Activated CD4-positive, alpha-beta memory T cell treated with anti-CD3 and anti-CD28 coated beads, Interleukin-2, amount 10 ng/mL, durations not matched to agents 7 days and 5 days (primary cell): ENCODE measurements at regions of chr5 and their contacts with region 1.

Region 1: GRCh38 chr5:140401362-140402257 is at the start of gene ANKHD1:
- DNase-seq: peak; percentile 98
- H3K4me3 Mint-ChIP-seq: no peak within 1 kb of the TSS
- H3K27ac Mint-ChIP-seq: peak within 1 kb of the TSS; percentile 76
- H3K4me1 Mint-ChIP-seq: peaks cover 34% of the 10 kb centered on the region
- H3K27me3 Mint-ChIP-seq: no peaks in the 10 kb centered on the region
- total RNA-seq, gene ANKHD1: 109 to 122 TPM

Region 2: DNA sequence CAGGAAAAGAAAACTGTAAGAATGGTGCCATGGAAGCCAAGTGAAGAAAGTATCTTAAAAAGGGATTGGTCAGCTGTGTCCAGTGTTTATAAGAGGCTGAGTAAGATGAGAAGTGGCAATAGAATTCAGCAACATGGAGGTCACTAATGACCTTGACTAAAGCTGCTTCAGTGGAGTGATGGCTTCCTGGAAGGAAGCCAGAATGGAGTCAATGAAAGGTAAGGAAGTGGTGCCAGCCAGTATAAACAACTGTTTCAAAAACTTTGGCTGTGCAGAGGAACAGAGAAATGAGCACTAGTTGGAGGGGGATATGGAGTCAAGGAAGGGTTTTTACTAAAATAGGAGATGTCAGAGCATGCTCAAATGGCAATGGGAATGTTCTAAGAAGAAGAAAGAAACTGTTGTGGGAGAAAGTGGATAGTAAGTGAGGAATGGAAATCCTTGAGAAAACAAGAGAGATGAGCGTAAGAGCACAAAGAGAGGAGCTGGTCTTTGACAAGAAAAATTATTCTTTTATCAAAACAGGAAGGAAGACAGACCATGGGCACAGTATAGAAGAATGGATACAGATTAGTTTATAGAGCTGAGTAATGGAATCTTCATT is 347.4 kb before region 1 on chr5:
- CTCF ChIA-PET with region 1: no interaction called
- POLR2A ChIA-PET with region 1: no interaction called
- DNase-seq: no peak
- H3K4me3 Mint-ChIP-seq: no peak overlapping the region
- H3K27ac Mint-ChIP-seq: no peak overlapping the region
- H3K4me1 Mint-ChIP-seq: no peaks in the 10 kb centered on the region
- H3K27me3 Mint-ChIP-seq: peaks cover 16% of the 10 kb centered on the region

Region 3: GRCh38 chr5:140287801-140288521 is 113.6 kb before region 1 on chr5:
- CTCF ChIA-PET with region 1: no interaction called
- POLR2A ChIA-PET with region 1: no interaction called
- DNase-seq: no peak
- H3K4me3 Mint-ChIP-seq: no peak overlapping the region
- H3K27ac Mint-ChIP-seq: no peak overlapping the region
- H3K4me1 Mint-ChIP-seq: peaks cover 39% of the 10 kb centered on the region
- H3K27me3 Mint-ChIP-seq: no peaks in the 10 kb centered on the region

Region 4: GRCh38 chr5:140362860-140363630 is 38.6 kb before region 1 on chr5:
- CTCF ChIA-PET with region 1: interaction called, 11 read pairs
- POLR2A ChIA-PET with region 1: interaction called, 5 read pairs
- DNase-seq: peak; percentile 87
- H3K4me3 Mint-ChIP-seq: peak overlapping the region; percentile 71
- H3K27ac Mint-ChIP-seq: no peak overlapping the region
- H3K4me1 Mint-ChIP-seq: peaks cover 12% of the 10 kb centered on the region
- H3K27me3 Mint-ChIP-seq: peaks cover 3% of the 10 kb centered on the region

Region 5: DNA sequence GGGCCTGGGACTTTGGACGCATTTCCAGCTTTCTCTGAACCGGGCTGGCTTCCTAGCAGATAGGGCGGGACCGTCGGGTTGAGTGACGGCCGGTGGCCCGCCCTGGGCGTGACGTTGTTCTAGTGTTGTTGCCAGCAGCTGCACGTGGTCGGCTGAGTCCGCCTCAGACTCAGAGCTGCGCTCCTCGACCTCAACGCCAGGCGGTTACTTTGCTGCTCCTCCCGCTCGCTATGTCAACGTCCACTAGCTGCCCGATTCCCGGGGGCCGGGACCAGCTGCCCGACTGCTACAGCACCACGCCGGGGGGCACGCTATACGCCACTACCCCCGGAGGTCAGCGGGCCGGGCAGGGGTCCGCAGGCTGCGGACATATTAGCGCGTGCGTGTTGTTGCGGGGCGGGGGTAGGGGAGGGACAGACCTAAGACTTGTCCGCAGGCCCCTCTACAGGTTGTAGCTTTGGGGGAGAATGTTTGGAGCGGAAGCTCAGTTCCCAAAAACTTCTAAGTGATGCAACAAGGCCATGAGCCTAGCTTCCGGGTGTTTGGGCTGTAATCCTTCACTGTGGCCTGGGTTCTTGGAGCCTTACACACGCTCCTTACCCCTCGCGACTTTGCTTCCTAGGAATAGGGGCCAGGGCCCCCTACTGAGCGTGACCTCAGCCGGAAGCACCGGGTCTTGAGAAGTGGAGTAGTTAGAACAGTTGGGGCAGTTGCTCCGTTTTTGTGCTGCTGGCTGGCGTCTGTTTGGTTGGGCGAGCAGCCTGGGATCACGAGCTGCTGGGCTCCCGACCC is 146.1 kb after region 1 on chr5 and contains the start of gene EIF4EBP3:
- CTCF ChIA-PET with region 1: interaction called, 3 read pairs
- POLR2A ChIA-PET with region 1: interaction called, 27 read pairs
- DNase-seq: peak; percentile 89
- H3K4me3 Mint-ChIP-seq: peak within 1 kb of the TSS; percentile 66
- H3K27ac Mint-ChIP-seq: peak within 1 kb of the TSS; percentile 83
- H3K4me1 Mint-ChIP-seq: peaks cover 56% of the 10 kb centered on the region
- H3K27me3 Mint-ChIP-seq: no peaks in the 10 kb centered on the region
- total RNA-seq, gene EIF4EBP3: 8.0 to 11.6 TPM

Region 6: GRCh38 chr5:140557136-140557805 is 155.7 kb after region 1 on chr5 and contains the start of gene SRA1:
- CTCF ChIA-PET with region 1: no interaction called
- POLR2A ChIA-PET with region 1: interaction called, 18 read pairs
- DNase-seq: peak; percentile 91
- H3K4me3 Mint-ChIP-seq: peak within 1 kb of the TSS; percentile 83
- H3K27ac Mint-ChIP-seq: peak within 1 kb of the TSS; percentile 79
- H3K4me1 Mint-ChIP-seq: peaks cover 50% of the 10 kb centered on the region
- H3K27me3 Mint-ChIP-seq: no peaks in the 10 kb centered on the region
- total RNA-seq, gene SRA1: 37.4 to 38.3 TPM

Region 7: DNA sequence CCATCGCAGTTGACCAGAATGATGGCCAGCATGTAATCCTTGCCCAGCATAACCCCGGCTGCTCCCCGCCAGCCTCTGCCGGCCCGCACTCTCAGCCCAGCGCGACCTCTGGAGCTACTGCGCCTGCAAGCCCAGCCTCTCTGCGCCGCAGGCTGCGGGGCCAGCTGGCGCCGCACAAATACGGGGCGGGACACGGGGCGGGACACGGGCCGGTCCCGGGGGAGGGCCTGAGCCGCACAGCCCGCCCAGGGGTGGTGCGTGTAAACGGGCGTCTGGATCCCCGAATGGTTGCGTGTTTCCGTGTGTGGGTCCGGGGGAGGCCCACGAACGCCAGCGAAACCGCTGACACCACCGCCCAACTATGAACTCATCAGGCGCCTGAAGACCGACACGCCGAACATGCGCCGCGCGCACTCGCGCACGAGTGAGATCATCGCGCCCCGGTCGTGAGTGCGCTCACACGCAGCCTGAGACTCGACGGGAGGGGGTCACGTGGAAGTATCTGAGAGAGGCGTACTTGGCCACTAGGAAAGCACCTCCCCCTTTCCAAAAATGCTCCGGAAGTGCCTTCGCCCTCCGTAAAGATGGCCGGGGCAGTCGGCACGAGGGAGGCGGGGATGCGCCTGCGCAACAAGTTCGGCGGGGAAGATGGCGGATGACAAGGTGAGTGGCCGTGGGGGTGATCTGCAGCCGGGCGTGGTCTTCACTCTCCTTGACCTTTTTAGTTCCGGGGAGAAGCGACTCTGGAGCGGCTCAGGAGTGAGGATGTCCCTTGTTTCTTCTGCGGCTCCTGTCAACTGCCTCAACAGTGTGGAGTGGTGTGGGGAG is 162.8 kb after region 1 on chr5 and contains the starts of genes APBB3 and SLC35A4:
- CTCF ChIA-PET with region 1: no interaction called
- POLR2A ChIA-PET with region 1: interaction called, 11 read pairs
- DNase-seq: peak; percentile 98
- H3K4me3 Mint-ChIP-seq: peak within 1 kb of the TSS; percentile 93
- H3K27ac Mint-ChIP-seq: peak within 1 kb of the TSS; percentile 89
- H3K4me1 Mint-ChIP-seq: peaks cover 67% of the 10 kb centered on the region
- H3K27me3 Mint-ChIP-seq: no peaks in the 10 kb centered on the region
- total RNA-seq, gene APBB3: 23.7 to 27.5 TPM
- total RNA-seq, gene SLC35A4: 78.9 to 82.1 TPM

Region 8: GRCh38 chr5:140690941-140691924 is 289.6 kb after region 1 on chr5 and contains the starts of genes HARS1 and HARS2:
- CTCF ChIA-PET with region 1: no interaction called
- POLR2A ChIA-PET with region 1: interaction called, 21 read pairs
- DNase-seq: peak; percentile 85
- H3K4me3 Mint-ChIP-seq: peak within 1 kb of the TSS; percentile 98
- H3K27ac Mint-ChIP-seq: peak within 1 kb of the TSS; percentile 89
- H3K4me1 Mint-ChIP-seq: peaks cover 44% of the 10 kb centered on the region
- H3K27me3 Mint-ChIP-seq: no peaks in the 10 kb centered on the region
- total RNA-seq, gene HARS1: 66.0 to 70.2 TPM
- total RNA-seq, gene HARS2: 30.6 to 34.7 TPM

Region 9: GRCh38 chr5:140710899-140711552 is 309.4 kb after region 1 on chr5:
- CTCF ChIA-PET with region 1: no interaction called
- POLR2A ChIA-PET with region 1: interaction called, 17 read pairs
- DNase-seq: peak; percentile 91
- H3K4me3 Mint-ChIP-seq: peak overlapping the region; percentile 80
- H3K27ac Mint-ChIP-seq: peak overlapping the region; percentile 90
- H3K4me1 Mint-ChIP-seq: peaks cover 23% of the 10 kb centered on the region
- H3K27me3 Mint-ChIP-seq: peaks cover 5% of the 10 kb centered on the region